Right ventricle myocardium superior (tissue), 1 donor: ENCODE measurements at regions of chr10 and their contacts with region 1.

Region 1: DNA sequence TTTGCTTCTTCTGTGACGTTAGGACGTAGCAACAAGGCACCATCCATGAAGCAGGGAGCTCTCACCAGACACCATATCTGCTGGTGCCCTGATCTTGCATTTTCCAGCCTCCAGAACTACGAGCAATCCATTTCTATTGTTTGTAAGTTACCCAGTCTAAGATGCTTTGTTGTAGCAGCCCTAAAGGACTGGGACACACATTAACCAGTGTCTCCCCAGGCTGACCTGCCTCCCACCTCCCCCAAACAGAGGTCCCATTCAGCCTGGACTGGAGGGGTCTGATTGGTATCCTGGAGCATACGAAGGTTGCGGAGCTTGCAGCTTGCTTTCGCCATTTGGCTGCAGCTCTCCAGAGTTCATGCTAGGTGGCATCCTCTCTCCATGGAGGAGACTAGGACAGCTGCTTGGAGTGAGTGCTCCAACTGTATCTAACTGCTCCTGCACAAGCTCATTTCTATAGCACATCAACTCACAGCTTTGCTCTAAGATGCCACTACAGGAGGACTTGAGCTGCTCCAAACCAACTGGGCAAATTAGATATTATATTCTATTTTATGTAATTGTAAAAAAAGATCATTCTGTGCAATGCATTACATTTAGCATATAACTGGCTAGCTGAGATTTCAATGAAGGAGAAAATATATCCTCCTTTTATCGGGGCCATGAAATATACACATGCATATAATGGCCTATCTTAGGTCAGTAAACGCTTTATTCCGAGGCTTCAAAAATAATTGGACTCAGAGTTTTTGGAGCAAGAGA is 8.0 kb upstream of the GRK5 start:
- DNase-seq: peak; percentile 54
- ATAC-seq: peak; percentile 97

Region 2: GRCh38 chr10:119445311-119445934 is 246.0 kb after region 1 on chr10:
- intact Hi-C with region 1: loop called (anchors 2 kb)
- DNase-seq: peak; percentile 88
- ATAC-seq: peak; percentile 73